Gastrocnemius medialis (tissue), 4 donors: ENCODE measurements at regions of chr9 and their contacts with region 1.

Region 1: DNA sequence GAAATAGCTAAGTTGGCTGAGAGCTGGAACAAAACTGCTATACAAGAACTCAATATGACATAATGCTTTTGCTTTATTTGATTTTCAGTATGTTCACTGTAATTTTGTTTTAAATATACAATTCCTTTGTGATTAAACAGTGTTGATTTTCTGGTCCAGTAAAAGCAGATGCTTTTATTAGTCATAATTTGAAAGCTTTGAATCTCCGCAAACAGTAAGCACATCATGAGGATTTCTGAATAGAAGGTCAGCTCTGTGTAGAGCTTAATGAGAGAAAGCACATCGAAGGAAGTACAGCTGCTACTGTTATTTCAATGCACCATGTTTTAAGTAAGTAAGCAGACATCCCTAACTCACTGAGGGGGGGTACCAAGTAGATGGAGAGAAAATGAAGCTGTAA is 701.3 kb upstream of the ACO1 start:
- DNase-seq: no peak
- ATAC-seq: no peak
- H3K4me3 ChIP-seq: no peak overlapping the region
- H3K27ac ChIP-seq: no peak overlapping the region
- H3K4me1 ChIP-seq: no peaks in the 10 kb centered on the region
- H3K27me3 ChIP-seq: no peaks in the 10 kb centered on the region
- CTCF ChIP-seq: no peak
- POLR2A ChIP-seq: no peak

Region 2: DNA sequence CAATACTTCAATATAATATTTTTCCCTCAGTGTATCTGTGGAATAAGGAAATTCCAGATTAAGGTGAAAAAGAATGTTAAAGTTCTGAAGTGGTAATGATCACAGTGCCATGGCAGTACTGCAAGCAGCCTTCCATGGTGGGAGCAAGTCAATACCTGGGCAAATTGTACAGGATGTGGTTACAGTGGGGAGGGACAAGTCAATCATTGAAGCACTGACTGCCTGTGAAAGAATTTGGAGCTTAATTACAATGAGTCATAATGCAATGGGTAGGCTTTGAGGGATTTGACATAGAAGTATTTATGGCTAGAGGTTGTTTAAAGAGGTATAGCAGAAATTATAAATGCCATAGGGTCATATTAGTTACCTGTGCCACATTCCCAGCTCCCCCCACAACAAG is 85.1 kb before region 1 on chr9:
- in situ Hi-C with region 1: loop called in 1 of 4 experiments (anchors 25 kb)
- intact Hi-C with region 1: no loop called
- DNase-seq: no peak
- ATAC-seq: no peak
- H3K4me3 ChIP-seq: no peak overlapping the region
- H3K27ac ChIP-seq: no peak overlapping the region
- H3K4me1 ChIP-seq: no peaks in the 10 kb centered on the region
- H3K27me3 ChIP-seq: no peaks in the 10 kb centered on the region
- CTCF ChIP-seq: no peak
- POLR2A ChIP-seq: no peak

Region 3: DNA sequence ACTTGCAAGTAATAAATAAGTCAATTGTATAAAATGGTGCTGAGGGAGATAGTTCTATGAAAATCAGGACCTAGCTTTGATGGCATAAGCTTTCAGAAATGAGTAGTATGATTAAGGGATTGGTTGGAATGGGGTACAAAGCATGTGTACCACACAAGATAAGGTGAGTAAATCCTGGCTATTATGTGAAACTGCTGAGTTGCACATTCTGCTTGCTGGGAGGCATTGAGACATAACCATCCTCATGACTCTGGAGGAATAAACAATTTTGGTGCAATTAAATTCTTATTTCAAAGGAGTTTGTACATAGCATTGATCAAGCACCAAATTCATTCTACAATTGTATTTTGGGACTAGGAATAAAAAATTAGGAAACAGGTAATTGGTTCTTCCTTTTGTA is 53.8 kb before region 1 on chr9:
- in situ Hi-C with region 1: no loop called
- intact Hi-C with region 1: no loop called
- DNase-seq: no peak
- ATAC-seq: no peak
- H3K4me3 ChIP-seq: no peak overlapping the region
- H3K27ac ChIP-seq: no peak overlapping the region
- H3K4me1 ChIP-seq: no peaks in the 10 kb centered on the region
- H3K27me3 ChIP-seq: no peaks in the 10 kb centered on the region
- CTCF ChIP-seq: no peak
- POLR2A ChIP-seq: no peak

Region 4: GRCh38 chr9:31745468-31745867 is 62.4 kb after region 1 on chr9:
- in situ Hi-C with region 1: loop called in 1 of 4 experiments (anchors 10 kb)
- intact Hi-C with region 1: no loop called
- DNase-seq: no peak
- ATAC-seq: no peak
- H3K4me3 ChIP-seq: no peak overlapping the region
- H3K27ac ChIP-seq: peak overlapping the region in 2 of 4 donors; percentile 1 to 51
- H3K4me1 ChIP-seq: no peaks in the 10 kb centered on the region
- H3K27me3 ChIP-seq: no peaks in the 10 kb centered on the region
- CTCF ChIP-seq: no peak
- POLR2A ChIP-seq: no peak

Region 5: GRCh38 chr9:31759703-31760102 is 76.6 kb after region 1 on chr9:
- in situ Hi-C with region 1: no loop called
- intact Hi-C with region 1: no loop called
- DNase-seq: no peak
- ATAC-seq: no peak
- H3K4me3 ChIP-seq: no peak overlapping the region
- H3K27ac ChIP-seq: no peak overlapping the region
- H3K4me1 ChIP-seq: no peaks in the 10 kb centered on the region
- H3K27me3 ChIP-seq: no peaks in the 10 kb centered on the region
- CTCF ChIP-seq: no peak
- POLR2A ChIP-seq: no peak